Pancreas (tissue), 10 donors: ENCODE measurements at regions of chr1 and their contacts with region 1.

Region 1: GRCh38 chr1:22641906-22642636 is 1.4 kb upstream of the C1QC start:
- DNase-seq: peak; percentile 74 to 96 (median 91)
- ATAC-seq: peak; percentile 78 to 94 (median 93)
- H3K4me3 ChIP-seq: no peak overlapping the region
- H3K27ac ChIP-seq: no peak overlapping the region
- H3K4me1 ChIP-seq: peaks cover 0 to 4% (median 0%) of the 10 kb centered on the region in 3 donors
- H3K27me3 ChIP-seq: no peaks in the 10 kb centered on the region
- CTCF ChIP-seq: peak; percentile 80 to 91 (median 88)

Region 2: GRCh38 chr1:22131875-22132486 is 510.1 kb before region 1 on chr1:
- intact Hi-C with region 1: loop called in 2 of 3 experiments (anchors 10 kb)
- DNase-seq: peak in 5 of 6 donors; percentile 37 to 89 (median 71)
- ATAC-seq: peak; percentile 72 to 85 (median 76)
- H3K4me3 ChIP-seq: no peak overlapping the region
- H3K27ac ChIP-seq: no peak overlapping the region
- H3K4me1 ChIP-seq: no peaks in the 10 kb centered on the region
- H3K27me3 ChIP-seq: no peaks in the 10 kb centered on the region
- CTCF ChIP-seq: peak; percentile 75 to 82 (median 78)

Region 3: GRCh38 chr1:22416555-22417454 is 225.3 kb before region 1 on chr1:
- intact Hi-C with region 1: loop called (anchors 2 to 5 kb)
- DNase-seq: peak; percentile 72 to 93 (median 87)
- ATAC-seq: peak; percentile 47 to 66 (median 60)
- H3K4me3 ChIP-seq: no peak overlapping the region
- H3K27ac ChIP-seq: no peak overlapping the region
- H3K4me1 ChIP-seq: peaks cover 13 to 25% (median 22%) of the 10 kb centered on the region in 3 donors
- H3K27me3 ChIP-seq: no peaks in the 10 kb centered on the region
- CTCF ChIP-seq: peak; percentile 84 to 96 (median 92)

Region 4: DNA sequence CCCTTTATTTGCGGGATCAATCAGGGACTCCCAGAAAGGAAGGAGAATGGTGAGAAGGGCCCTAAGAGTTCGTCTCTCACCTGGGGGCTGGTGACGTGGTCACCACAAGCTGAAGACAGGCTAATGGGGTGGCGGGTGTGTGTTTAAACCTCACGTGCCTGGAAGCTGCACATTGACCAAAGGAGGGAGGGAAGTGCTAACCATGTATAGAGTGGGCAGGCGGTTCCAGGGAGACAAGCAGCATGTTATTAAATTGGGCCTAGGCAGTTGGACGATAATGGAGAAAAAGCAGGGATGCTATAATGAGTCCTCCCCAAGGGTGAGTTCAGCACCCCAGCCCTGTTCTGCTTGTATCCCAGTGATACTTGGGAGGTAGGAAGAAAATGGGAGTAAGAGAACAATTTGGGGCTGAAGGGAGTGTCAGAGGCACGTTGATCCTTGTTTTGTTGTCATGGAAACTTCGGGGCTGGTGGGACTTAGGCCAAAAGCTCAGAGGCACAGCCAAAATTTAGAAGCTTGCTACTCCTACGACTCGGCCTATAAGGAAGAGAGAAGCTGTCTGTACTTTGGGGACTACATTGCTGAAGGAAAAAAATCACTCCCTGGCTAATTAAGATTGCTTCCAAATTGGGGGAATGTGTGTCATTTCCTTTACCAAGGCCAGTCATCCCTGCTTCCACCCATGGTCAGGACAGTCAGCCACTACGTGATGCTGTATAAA is 112.0 kb before region 1 on chr1:
- intact Hi-C with region 1: loop called in 1 of 3 experiments (anchors 10 kb)
- DNase-seq: peak in 1 of 6 donors; percentile 33
- ATAC-seq: no peak
- H3K4me3 ChIP-seq: no peak overlapping the region
- H3K27ac ChIP-seq: no peak overlapping the region
- H3K4me1 ChIP-seq: peaks cover 35 to 51% (median 43%) of the 10 kb centered on the region in 3 donors
- H3K27me3 ChIP-seq: no peaks in the 10 kb centered on the region
- CTCF ChIP-seq: no peak